GM12878 (cell line): ENCODE measurements at regions of chr2 and their contacts with region 1.

Region 1: GRCh38 chr2:86221066-86221684 is 21.9 kb downstream of the MRPL35 start:
- DNase-seq: no peak
- ATAC-seq: peak; percentile 81
- H3K4me3 ChIP-seq: no peak overlapping the region
- H3K27ac ChIP-seq: no peak overlapping the region
- H3K4me1 ChIP-seq: peaks cover 18% of the 10 kb centered on the region
- H3K27me3 ChIP-seq: no peaks in the 10 kb centered on the region
- CTCF ChIP-seq: peak; percentile 91 to 99 (median 96)
- EP300 ChIP-seq: no peak
- POLR2A ChIP-seq: no peak
- RAD21 ChIP-seq: peak; percentile 99

Region 2: GRCh38 chr2:86185517-86186212 is 35.5 kb before region 1 on chr2:
- CTCF ChIA-PET with region 1: interaction called, 11 read pairs
- POLR2A ChIA-PET with region 1: interaction called, 3 read pairs
- RAD21 ChIA-PET with region 1: interaction called, 7 read pairs
- SMC1A ChIA-PET with region 1: interaction called, 7 read pairs
- in situ Hi-C with region 1: no loop called
- intact Hi-C with region 1: no loop called
- DNase-seq: no peak
- ATAC-seq: peak; percentile 65
- H3K4me3 ChIP-seq: peak overlapping the region; percentile 8; the same call in 1 of the 2 replicates
- H3K27ac ChIP-seq: peak overlapping the region; percentile 78
- H3K4me1 ChIP-seq: peaks cover 23% of the 10 kb centered on the region
- H3K27me3 ChIP-seq: no peaks in the 10 kb centered on the region
- CTCF ChIP-seq: no peak
- EP300 ChIP-seq: no peak
- POLR2A ChIP-seq: no peak
- RAD21 ChIP-seq: no peak

Region 3: DNA sequence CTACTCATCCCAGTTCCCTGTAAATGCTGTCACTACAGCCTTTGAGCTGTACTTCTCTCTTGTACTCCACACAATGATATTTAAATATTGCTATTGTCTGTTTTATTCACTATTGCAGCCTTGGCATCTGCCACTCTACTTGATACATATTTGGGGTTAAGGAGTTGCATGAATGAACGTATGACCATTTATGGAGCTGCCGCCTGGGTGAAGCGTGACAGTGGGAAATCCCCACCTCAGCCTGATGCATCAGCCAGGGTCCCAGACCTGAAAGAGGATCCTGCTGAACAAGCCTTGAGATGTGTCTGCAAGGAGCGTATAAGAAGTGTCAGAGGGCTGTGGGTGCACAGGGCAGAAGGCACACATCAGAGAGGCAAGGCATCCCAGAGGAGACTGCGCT is 17.2 kb after region 1 on chr2:
- CTCF ChIA-PET with region 1: interaction called, 10 read pairs
- POLR2A ChIA-PET with region 1: interaction called, 3 read pairs
- RAD21 ChIA-PET with region 1: interaction called, 14 read pairs
- SMC1A ChIA-PET with region 1: interaction called, 29 read pairs
- in situ Hi-C with region 1: no loop called
- intact Hi-C with region 1: no loop called
- DNase-seq: peak; percentile 74
- ATAC-seq: peak; percentile 98
- H3K4me3 ChIP-seq: no peak overlapping the region
- H3K27ac ChIP-seq: no peak overlapping the region
- H3K4me1 ChIP-seq: peaks cover 19% of the 10 kb centered on the region
- H3K27me3 ChIP-seq: no peaks in the 10 kb centered on the region
- CTCF ChIP-seq: no peak
- EP300 ChIP-seq: no peak
- POLR2A ChIP-seq: no peak
- RAD21 ChIP-seq: no peak

Region 4: DNA sequence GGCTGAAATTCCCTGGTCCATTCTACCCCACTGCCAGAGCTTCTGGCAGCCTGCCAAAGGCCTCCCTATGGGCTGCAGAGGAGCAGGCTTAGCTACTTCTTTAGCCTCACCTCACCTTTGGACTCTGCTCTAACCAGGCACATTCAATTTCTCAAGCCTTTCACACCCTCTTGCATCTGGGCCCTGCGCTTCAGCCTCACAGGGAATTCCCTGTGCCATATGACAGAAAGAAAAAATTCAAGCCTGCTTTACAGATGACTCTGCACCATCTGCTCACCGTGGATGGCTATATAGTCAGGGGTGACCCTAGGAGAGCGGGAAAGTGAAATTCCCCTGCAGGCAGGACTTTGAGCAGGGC is 53.7 kb after region 1 on chr2:
- CTCF ChIA-PET with region 1: interaction called, 7 read pairs
- POLR2A ChIA-PET with region 1: interaction called, 21 read pairs
- RAD21 ChIA-PET with region 1: interaction called, 18 read pairs
- SMC1A ChIA-PET with region 1: interaction called, 13 read pairs
- in situ Hi-C with region 1: no loop called
- intact Hi-C with region 1: no loop called
- DNase-seq: peak; percentile 60
- ATAC-seq: peak; percentile 90
- H3K4me3 ChIP-seq: no peak overlapping the region
- H3K27ac ChIP-seq: peak overlapping the region; percentile 58
- H3K4me1 ChIP-seq: peaks cover 28% of the 10 kb centered on the region
- H3K27me3 ChIP-seq: no peaks in the 10 kb centered on the region
- CTCF ChIP-seq: no peak
- EP300 ChIP-seq: peak in 1 of 2 experiments; percentile 55; a peak in 2 of 4 replicates
- POLR2A ChIP-seq: no peak
- RAD21 ChIP-seq: no peak

Region 5: DNA sequence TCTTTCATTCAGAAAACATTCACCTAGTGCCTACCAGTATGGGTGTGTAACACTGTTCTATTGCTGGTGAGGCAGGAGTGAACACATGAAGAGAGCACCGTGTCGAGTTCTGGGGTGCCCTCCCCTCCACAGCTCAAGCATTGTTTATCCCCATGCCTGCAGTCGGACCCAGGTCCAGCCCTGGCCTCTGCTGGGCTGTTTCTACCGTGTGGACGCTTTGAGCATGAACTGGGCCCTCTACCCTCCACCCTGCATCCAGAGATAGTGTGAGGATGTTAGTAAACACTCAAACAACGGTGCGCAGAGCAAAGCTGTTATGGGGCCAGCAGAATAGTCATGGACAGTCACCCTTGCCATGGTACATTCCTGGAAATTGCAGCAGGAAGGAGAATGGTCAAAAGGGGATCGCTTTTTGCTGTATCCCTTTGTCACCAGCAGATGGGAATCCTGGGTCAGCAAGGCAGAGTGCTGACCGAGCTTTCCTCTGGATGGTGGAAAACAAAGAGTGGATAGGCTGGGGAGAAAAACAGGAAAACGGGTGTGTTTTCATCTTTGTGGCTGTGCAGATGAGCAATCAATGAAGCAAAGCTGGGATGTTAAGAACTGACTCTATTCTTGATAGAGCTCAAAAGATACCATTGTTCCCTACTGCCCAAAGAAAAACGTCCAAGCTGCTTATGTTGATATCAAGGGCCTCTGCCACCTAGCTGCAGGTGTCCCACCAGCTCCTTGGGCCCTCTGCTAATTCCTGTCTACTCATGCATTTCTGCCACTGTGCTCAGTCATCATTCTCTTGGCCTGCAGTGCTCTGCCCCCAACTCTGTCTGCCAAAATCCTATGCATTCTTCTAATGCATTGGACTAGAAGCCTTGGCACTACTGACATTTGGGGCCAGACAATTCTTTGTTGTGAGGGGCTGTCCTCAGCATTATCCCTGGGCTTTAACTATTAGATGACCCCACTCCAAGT is 77.5 kb after region 1 on chr2:
- CTCF ChIA-PET with region 1: interaction called, 278 read pairs
- POLR2A ChIA-PET with region 1: interaction called, 4 read pairs
- RAD21 ChIA-PET with region 1: interaction called, 181 read pairs
- SMC1A ChIA-PET with region 1: interaction called, 178 read pairs
- in situ Hi-C with region 1: loop called (anchors 5 kb)
- intact Hi-C with region 1: loop called (anchors 1 kb)
- DNase-seq: no peak
- ATAC-seq: no peak; the same call in 2 of the 3 replicates
- H3K4me3 ChIP-seq: no peak overlapping the region
- H3K27ac ChIP-seq: no peak overlapping the region
- H3K4me1 ChIP-seq: no peaks in the 10 kb centered on the region
- H3K27me3 ChIP-seq: no peaks in the 10 kb centered on the region
- CTCF ChIP-seq: 0 out of 6 replicates have a peak, but pooled peaks of 1 of the 3 experiments have one; percentile 10
- EP300 ChIP-seq: no peak
- POLR2A ChIP-seq: no peak
- RAD21 ChIP-seq: no peak

Region 6: GRCh38 chr2:86368161-86368824 is 147.1 kb after region 1 on chr2:
- CTCF ChIA-PET with region 1: interaction called, 232 read pairs
- POLR2A ChIA-PET with region 1: interaction called, 3 read pairs
- RAD21 ChIA-PET with region 1: interaction called, 54 read pairs
- SMC1A ChIA-PET with region 1: interaction called, 41 read pairs
- in situ Hi-C with region 1: loop called (anchors 5 kb)
- intact Hi-C with region 1: loop called (anchors 1 kb)
- DNase-seq: no peak
- ATAC-seq: peak; percentile 79
- H3K4me3 ChIP-seq: no peak overlapping the region
- H3K27ac ChIP-seq: no peak overlapping the region
- H3K4me1 ChIP-seq: no peaks in the 10 kb centered on the region
- H3K27me3 ChIP-seq: no peaks in the 10 kb centered on the region
- CTCF ChIP-seq: peak; percentile 63 to 67 (median 66)
- EP300 ChIP-seq: no peak
- POLR2A ChIP-seq: no peak
- RAD21 ChIP-seq: peak; percentile 85